ENCODE measurements at regions of chr1 and their contacts with region 1.

Region 1: GRCh38 chr1:10253755-10254154 is 43.4 kb downstream of the KIF1B start:
- DNase-seq: no peak
- H3K4me3 ChIP-seq: no peak overlapping the region
- H3K4me3 Mint-ChIP-seq: no peak overlapping the region
- H3K27ac ChIP-seq: no peak overlapping the region
- H3K27ac Mint-ChIP-seq: peak overlapping the region in 1 of 8 donors; percentile 47
- H3K4me1 ChIP-seq: no peaks in the 10 kb centered on the region
- H3K4me1 Mint-ChIP-seq: peaks cover 2 to 10% (median 6%) of the 10 kb centered on the region in 3 donors
- H3K27me3 ChIP-seq: no peaks in the 10 kb centered on the region
- H3K27me3 Mint-ChIP-seq: no peaks in the 10 kb centered on the region

Region 2: GRCh38 chr1:10407201-10407600 is 153.4 kb after region 1 on chr1:
- CTCF ChIA-PET with region 1: no interaction called
- POLR2A ChIA-PET with region 1: interaction called, 11 read pairs
- DNase-seq: no peak
- H3K4me3 ChIP-seq: no peak overlapping the region
- H3K4me3 Mint-ChIP-seq: no peak overlapping the region
- H3K27ac ChIP-seq: no peak overlapping the region
- H3K27ac Mint-ChIP-seq: no peak overlapping the region
- H3K4me1 ChIP-seq: no peaks in the 10 kb centered on the region
- H3K4me1 Mint-ChIP-seq: no peaks in the 10 kb centered on the region
- H3K27me3 ChIP-seq: no peaks in the 10 kb centered on the region
- H3K27me3 Mint-ChIP-seq: no peaks in the 10 kb centered on the region

Region 3: DNA sequence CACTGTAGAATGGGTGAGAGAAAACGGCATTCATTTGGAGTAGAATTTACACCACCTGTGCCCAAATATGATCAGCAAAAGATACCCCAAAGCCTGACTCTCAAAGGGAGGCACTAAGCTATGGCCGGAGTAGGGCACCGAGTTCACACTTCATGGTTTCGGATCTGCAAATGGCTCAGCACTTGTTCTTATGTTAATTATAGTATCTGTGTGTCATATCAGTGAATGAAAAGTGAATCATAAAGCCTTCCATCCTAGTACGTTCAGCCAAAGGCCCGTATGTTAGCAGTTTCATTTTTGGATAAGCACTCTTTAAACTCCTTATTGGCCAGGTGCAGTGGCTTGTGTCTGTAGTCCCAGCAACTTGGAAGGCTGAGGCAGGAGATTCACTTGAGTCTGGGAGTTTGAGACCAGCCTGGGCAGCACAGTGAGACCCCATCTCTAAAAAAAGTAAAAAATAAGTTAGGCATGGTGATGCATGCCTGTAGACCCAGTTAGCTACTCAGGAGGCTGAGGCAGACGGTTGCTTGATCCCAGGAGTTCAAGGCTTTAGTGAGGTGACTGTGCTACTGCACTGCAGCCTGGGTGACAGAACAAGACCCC is 191.1 kb after region 1 on chr1:
- CTCF ChIA-PET with region 1: no interaction called
- POLR2A ChIA-PET with region 1: no interaction called
- DNase-seq: no peak
- H3K4me3 ChIP-seq: no peak overlapping the region
- H3K4me3 Mint-ChIP-seq: no peak overlapping the region
- H3K27ac ChIP-seq: no peak overlapping the region
- H3K27ac Mint-ChIP-seq: peak overlapping the region in 1 of 8 donors; percentile 26
- H3K4me1 ChIP-seq: no peaks in the 10 kb centered on the region
- H3K4me1 Mint-ChIP-seq: no peaks in the 10 kb centered on the region
- H3K27me3 ChIP-seq: no peaks in the 10 kb centered on the region
- H3K27me3 Mint-ChIP-seq: no peaks in the 10 kb centered on the region

Measured in CD8-positive, alpha-beta memory T cell (primary cell).